Ovary (tissue), 10 donors: ENCODE measurements at regions of chr17 and their contacts with region 1.

Region 1: GRCh38 chr17:31008374-31009041 is 37.7 kb downstream of the RNF135 start:
- DNase-seq: peak; percentile 56 to 78 (median 61)
- H3K4me3 ChIP-seq: peak overlapping the region; percentile 66
- H3K27ac ChIP-seq: peak overlapping the region; percentile 82 to 91
- H3K4me1 ChIP-seq: no peaks in the 10 kb centered on the region
- H3K27me3 ChIP-seq: no peaks in the 10 kb centered on the region
- CTCF ChIP-seq: no peak
- EP300 ChIP-seq: no peak
- POLR2A ChIP-seq: no peak

Region 2: GRCh38 chr17:31094600-31095238 is 86.2 kb after region 1 on chr17 and contains the start of gene NF1:
- intact Hi-C with region 1: loop called in 1 of 4 experiments (anchors 5 kb)
- DNase-seq: peak; percentile 97 to 98 (median 97)
- H3K4me3 ChIP-seq: peak within 1 kb of the TSS; percentile 69
- H3K27ac ChIP-seq: peak within 1 kb of the TSS; percentile 85 to 90
- H3K4me1 ChIP-seq: peaks cover 2% of the 10 kb centered on the region
- H3K27me3 ChIP-seq: no peaks in the 10 kb centered on the region
- CTCF ChIP-seq: no peak
- EP300 ChIP-seq: no peak
- POLR2A ChIP-seq: peak; percentile 29
- total RNA-seq, gene NF1: 45.5 to 62.0 (median 58.1) TPM